Activated CD4-positive, alpha-beta T cell treated with anti-CD3 and anti-CD28 coated beads for 36 hours (primary cell): ENCODE measurements at regions of chr3 and their contacts with region 1.

Region 1: GRCh38 chr3:69842789-69843188 is 103.5 kb downstream of the MITF start:
- DNase-seq: no peak
- ATAC-seq: no peak
- H3K4me3 Mint-ChIP-seq: no peak overlapping the region
- H3K27ac Mint-ChIP-seq: no peak overlapping the region
- H3K4me1 Mint-ChIP-seq: no peaks in the 10 kb centered on the region
- H3K27me3 Mint-ChIP-seq: no peaks in the 10 kb centered on the region

Region 2: GRCh38 chr3:69649120-69650065 is 193.4 kb before region 1 on chr3:
- CTCF ChIA-PET with region 1: no interaction called
- POLR2A ChIA-PET with region 1: no interaction called
- intact Hi-C with region 1: no loop called
- DNase-seq: no peak
- ATAC-seq: no peak
- H3K4me3 Mint-ChIP-seq: no peak overlapping the region
- H3K27ac Mint-ChIP-seq: no peak overlapping the region
- H3K4me1 Mint-ChIP-seq: no peaks in the 10 kb centered on the region
- H3K27me3 Mint-ChIP-seq: peaks cover 5% of the 10 kb centered on the region

Region 3: DNA sequence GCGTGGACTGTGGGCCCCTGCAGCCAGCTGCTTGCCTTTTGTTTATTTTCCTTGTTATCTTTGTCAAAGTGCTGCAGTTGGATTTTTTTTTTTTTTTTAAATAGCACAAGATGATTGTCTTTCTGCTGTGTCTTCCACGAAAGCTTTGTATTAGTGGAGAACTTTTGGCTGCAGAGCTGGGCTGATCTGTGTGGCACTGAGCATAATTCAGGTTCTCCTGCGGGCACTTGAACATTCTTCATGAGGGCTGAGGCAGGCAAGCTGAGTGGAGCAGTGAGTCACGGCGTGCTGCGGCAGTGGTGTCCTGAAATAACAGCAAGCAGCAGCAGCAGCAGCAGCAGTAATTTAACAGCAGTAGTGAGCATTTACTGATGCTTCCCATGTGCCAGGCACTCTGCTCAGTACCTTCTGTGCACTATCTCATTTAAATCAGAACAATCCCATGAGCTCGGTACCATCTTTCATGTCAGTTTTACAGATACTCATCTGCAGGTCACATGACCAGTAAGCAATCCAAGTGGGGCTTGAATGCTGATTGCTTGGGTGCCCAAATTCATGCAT is 57.8 kb before region 1 on chr3:
- CTCF ChIA-PET with region 1: no interaction called
- POLR2A ChIA-PET with region 1: no interaction called
- intact Hi-C with region 1: loop called in 1 of 2 experiments (anchors 10 kb)
- DNase-seq: no peak
- ATAC-seq: no peak
- H3K4me3 Mint-ChIP-seq: no peak overlapping the region
- H3K27ac Mint-ChIP-seq: no peak overlapping the region
- H3K4me1 Mint-ChIP-seq: no peaks in the 10 kb centered on the region
- H3K27me3 Mint-ChIP-seq: peaks cover 4% of the 10 kb centered on the region